ENCODE measurements at regions of chr19 and their contacts with region 1.

Region 1: GRCh38 chr19:16185123-16185767 is at the start of gene FAM32A:
- H3K4me3 Mint-ChIP-seq: peak within 1 kb of the TSS; percentile 98
- H3K27ac Mint-ChIP-seq: peak within 1 kb of the TSS; percentile 98
- H3K4me1 Mint-ChIP-seq: peaks cover 34% of the 10 kb centered on the region
- H3K27me3 Mint-ChIP-seq: no peaks in the 10 kb centered on the region

Region 2: DNA sequence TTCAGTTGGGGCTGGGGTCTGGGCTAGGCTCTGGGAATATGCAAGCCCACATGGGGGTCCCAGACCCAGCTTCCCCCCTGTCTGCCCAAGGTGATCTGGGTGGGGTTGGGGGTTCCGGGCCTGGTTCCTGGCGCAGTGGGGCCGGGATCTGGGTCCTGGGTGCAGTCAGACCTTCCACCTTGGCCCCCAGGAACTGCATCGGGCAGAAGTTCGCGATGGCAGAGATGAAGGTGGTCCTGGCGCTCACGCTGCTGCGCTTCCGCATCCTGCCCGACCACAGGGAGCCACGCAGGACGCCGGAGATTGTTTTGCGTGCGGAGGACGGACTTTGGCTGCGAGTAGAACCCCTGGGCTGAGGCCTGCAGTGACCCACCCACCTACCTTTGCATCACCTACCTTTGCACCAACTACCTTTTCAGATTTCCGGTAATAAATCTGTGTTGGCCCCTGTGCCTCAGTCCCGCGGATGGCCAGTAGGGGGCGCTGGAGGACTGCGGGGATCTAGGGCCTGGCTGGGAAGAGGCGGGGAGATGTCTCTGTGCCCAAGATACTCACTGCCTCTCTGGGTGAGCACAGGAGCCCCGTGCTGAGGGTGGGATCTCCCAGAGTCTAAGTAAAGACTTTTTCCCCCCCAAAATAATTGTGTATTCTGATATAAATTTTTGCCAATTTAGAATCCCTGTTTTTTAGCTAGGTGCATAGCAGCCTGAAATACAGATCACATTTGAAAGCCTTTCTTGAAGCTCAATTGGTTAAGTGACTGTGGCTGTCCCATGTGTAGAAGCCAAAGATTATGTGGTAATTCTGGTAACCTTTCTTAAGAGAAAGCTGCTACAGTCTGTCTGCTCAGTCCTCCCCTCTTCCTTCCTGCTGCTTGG is 556.0 kb before region 1 on chr19:
- intact Hi-C with region 1: loop called (anchors 5 kb)
- H3K4me3 Mint-ChIP-seq: no peak overlapping the region
- H3K27ac Mint-ChIP-seq: no peak overlapping the region
- H3K4me1 Mint-ChIP-seq: peaks cover 10% of the 10 kb centered on the region
- H3K27me3 Mint-ChIP-seq: peaks cover 14% of the 10 kb centered on the region

Region 3: GRCh38 chr19:15828429-15829305 is 356.6 kb before region 1 on chr19:
- intact Hi-C with region 1: no loop called
- H3K4me3 Mint-ChIP-seq: no peak overlapping the region
- H3K27ac Mint-ChIP-seq: no peak overlapping the region
- H3K4me1 Mint-ChIP-seq: peaks cover 6% of the 10 kb centered on the region
- H3K27me3 Mint-ChIP-seq: peaks cover 3% of the 10 kb centered on the region

Region 4: DNA sequence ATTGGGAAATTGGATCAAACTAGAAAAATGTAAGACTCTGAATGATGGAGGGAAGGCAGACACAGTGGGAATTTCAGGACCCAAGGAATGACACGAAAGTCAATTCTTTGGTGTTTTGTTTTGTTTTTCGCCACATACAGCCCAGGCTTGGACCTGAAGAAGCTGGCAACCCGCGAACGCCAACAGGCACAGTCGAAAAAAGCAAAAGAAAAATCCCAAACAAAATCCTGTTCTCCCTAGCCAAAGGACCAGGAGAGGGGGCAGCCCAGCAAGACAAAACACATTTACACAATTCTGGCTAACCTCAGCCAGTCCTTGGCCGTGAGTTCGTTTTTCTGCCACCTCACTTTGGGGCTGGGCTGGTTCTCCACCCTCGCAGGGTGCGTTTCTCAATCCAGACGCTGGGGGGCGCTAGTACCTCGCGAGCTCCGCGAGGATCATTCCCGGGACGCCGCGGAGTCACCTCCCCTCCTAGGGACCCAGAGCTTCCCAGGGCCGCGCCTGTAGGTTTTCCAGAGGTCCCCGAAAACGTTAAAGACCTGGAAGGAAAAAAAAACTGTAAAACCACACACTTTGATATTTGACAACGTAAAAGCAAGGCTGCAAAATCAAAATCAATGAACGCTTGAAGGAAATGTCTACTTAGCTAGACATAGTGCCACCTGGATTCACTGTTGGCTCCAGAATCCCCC is 143.8 kb before region 1 on chr19:
- intact Hi-C with region 1: loop called (anchors 1 kb)
- H3K4me3 Mint-ChIP-seq: peak overlapping the region; percentile 6
- H3K27ac Mint-ChIP-seq: no peak overlapping the region
- H3K4me1 Mint-ChIP-seq: peaks cover 8% of the 10 kb centered on the region
- H3K27me3 Mint-ChIP-seq: peaks cover 6% of the 10 kb centered on the region

Region 5: DNA sequence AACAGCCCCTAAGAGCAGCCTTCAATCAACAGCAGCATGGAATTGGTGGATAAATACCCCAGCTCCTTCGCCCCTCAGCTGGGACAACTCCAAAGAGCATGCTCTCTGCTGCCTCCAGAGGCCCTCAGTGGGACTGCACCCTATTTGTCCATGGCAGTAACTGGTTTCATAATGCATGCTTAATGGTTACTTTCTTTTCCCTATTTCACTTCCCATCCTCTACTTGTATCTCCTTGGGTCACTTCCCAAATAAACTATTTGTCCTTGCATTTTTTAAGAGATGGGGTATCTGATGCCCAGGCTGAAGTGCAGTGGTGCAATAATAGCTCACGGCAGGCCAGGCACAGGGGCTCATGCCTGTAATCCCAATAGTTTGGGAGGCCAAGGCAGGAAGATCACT is 122.5 kb before region 1 on chr19:
- intact Hi-C with region 1: loop called (anchors 5 kb)
- H3K4me3 Mint-ChIP-seq: peak overlapping the region; percentile 41
- H3K27ac Mint-ChIP-seq: peak overlapping the region; percentile 83
- H3K4me1 Mint-ChIP-seq: peaks cover 22% of the 10 kb centered on the region
- H3K27me3 Mint-ChIP-seq: peaks cover 2% of the 10 kb centered on the region

Region 6: GRCh38 chr19:16111160-16111908 is 73.9 kb before region 1 on chr19 and contains the start of gene RAB8A:
- intact Hi-C with region 1: loop called (anchors 1 kb)
- H3K4me3 Mint-ChIP-seq: peak within 1 kb of the TSS; percentile 94
- H3K27ac Mint-ChIP-seq: peak within 1 kb of the TSS; percentile 99
- H3K4me1 Mint-ChIP-seq: peaks cover 39% of the 10 kb centered on the region
- H3K27me3 Mint-ChIP-seq: no peaks in the 10 kb centered on the region

Region 7: DNA sequence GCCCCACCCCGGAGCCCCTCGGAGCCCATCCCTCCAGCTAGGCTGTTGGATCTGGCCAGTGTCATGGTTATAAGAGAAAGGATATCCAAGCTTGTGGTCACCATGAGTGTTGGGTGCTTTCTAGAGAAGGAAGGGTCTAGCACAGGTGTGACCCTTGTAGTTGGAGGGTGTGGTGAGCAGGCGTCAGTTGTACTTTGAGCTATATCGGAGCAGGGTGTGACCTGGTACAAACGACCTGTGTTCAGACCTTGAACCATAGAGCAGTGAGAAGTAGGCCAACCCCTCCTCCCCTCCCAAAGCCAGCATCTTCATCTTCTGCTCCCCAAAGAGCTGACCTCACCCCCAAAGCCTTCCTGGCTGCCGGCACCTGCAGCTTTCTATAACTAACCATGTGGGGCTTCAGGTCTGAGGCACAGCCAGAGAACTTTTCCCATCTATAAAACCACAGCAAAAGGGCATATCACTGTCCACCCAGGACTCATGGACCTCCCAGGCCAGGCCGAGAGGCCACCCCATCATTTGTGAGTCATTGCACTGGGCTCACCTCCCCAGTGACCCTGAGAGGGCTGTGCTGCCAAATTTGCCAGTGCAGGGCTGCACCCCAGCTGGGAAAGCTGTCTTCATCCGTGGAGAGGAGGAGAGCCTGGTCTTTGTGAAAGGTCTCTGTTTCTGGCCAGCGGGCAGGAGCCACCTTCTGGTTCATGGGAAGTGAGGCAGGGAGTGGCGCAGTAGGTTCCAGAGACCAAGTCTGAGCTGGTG is 59.3 kb before region 1 on chr19:
- intact Hi-C with region 1: no loop called
- H3K4me3 Mint-ChIP-seq: no peak overlapping the region
- H3K27ac Mint-ChIP-seq: peak overlapping the region; percentile 57
- H3K4me1 Mint-ChIP-seq: peaks cover 51% of the 10 kb centered on the region
- H3K27me3 Mint-ChIP-seq: no peaks in the 10 kb centered on the region

Region 8: DNA sequence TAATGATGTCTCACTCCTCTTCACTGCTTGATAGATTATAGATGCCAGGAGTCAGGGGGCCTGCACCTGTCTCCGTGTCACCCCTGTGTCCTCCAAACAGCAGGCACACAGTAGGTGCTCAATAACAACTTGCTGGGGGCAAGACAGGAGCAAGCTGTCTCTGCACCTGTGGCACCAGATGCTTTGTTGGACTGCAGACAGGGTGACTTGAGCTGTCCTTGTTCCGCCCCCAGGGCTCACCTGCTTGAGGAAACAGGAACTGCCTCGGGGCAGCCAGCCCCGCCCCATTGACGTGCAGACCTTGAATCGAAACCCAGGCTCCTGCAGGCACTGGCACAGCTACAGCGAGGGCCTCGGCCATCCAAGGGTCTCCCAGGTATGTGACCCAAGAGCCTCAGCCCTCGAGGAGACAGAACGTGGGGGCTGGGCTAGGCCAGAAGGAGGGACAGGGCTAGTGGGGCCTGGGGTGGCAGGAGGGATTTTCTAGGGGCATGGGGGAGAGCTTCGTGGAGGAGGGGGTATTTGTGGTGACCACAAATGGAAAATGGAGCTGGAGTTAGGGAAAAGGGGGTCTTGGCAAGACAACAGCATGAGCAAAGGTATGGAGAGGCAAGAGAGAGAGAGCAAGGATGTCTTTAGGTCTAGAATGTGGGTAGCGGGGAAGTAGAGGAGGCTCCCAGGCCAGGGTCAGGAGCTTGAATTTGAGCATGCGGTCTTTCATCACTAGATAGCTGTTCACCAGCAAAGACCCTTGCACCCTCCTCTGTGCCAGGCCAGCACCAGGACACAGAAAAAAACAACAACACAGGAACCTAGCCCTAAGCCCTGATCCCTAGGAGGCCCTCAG is 41.6 kb before region 1 on chr19 and contains the start of gene HSH2D:
- intact Hi-C with region 1: loop called (anchors 5 kb)
- H3K4me3 Mint-ChIP-seq: peak within 1 kb of the TSS; percentile 89
- H3K27ac Mint-ChIP-seq: peak within 1 kb of the TSS; percentile 97
- H3K4me1 Mint-ChIP-seq: peaks cover 69% of the 10 kb centered on the region
- H3K27me3 Mint-ChIP-seq: no peaks in the 10 kb centered on the region

Measured in dendritic cell treated with granulocyte-macrophage colony-stimulating factor and Interleukin-4, amounts not matched to agents 40 ng/mL and 50 ng/mL, for 4 days (primary cell).